HAP-1 (cell line): ENCODE measurements at regions of chr10 and their contacts with region 1.

Region 1: GRCh38 chr10:84264611-84265141 is 19.8 kb downstream of the RGR start:
- DNase-seq: peak; percentile 44 to 77
- H3K4me3 ChIP-seq: no peak overlapping the region
- H3K4me1 ChIP-seq: no peaks in the 10 kb centered on the region
- H3K27me3 ChIP-seq: peaks cover 9% of the 10 kb centered on the region; the same call in 1 of the 2 replicates

Region 2: DNA sequence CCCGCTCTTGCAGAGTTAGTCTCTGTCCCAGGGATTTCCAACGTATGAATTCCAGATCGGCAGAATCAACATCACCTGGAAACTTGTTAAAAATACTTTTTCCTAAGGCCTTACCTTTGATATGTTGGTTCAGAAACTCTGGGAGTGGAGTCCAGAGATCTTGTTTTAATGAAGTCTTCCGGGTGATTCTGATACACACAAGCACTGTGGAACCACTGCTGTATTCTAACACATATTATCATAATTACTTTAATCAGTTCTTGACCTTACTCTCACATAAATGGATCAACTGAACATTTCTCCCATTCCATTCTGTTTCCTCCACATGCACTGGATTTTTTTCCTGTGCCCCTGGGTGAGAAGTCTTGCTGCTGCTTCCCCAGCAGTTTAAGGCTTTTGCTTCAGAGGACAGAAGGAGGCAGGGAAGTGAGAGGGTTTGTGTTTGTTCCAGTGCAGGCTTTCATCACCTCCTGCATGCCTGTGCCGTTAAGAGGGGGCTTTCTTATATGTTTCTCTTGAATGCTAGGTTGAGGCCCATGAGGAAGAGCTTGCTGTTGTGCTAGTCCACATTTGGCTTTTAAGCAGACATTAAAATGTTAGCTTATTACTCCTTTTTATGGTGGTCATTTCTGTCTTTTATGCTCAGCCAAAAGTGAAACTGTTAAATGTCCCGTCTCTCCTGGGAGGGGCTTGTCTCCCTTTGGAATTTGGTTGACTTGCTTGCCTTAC is 96.1 kb after region 1 on chr10:
- in situ Hi-C with region 1: loop called (anchors 10 kb)
- DNase-seq: no peak
- H3K4me3 ChIP-seq: no peak overlapping the region
- H3K4me1 ChIP-seq: peaks cover 18% of the 10 kb centered on the region; the same call in 1 of the 2 replicates
- H3K27me3 ChIP-seq: no peaks in the 10 kb centered on the region

Region 3: GRCh38 chr10:84540617-84541561 is 276.2 kb after region 1 on chr10:
- in situ Hi-C with region 1: loop called (anchors 5 kb)
- DNase-seq: peak; percentile 47 to 86
- H3K4me3 ChIP-seq: peak overlapping the region; percentile 11
- H3K4me1 ChIP-seq: peaks cover 5% of the 10 kb centered on the region
- H3K27me3 ChIP-seq: 0 out of 2 replicates have a peak, but pooled peaks cover 3% of the 10 kb centered on the region

Region 4: GRCh38 chr10:84715911-84716310 is 451.2 kb after region 1 on chr10:
- in situ Hi-C with region 1: loop called (anchors 25 kb)
- DNase-seq: peak; percentile 36 to 68
- H3K4me3 ChIP-seq: no peak overlapping the region
- H3K4me1 ChIP-seq: no peaks in the 10 kb centered on the region
- H3K27me3 ChIP-seq: 0 out of 2 replicates have a peak, but pooled peaks cover 2% of the 10 kb centered on the region